Activated CD8-positive, alpha-beta T cell treated with anti-CD3 and anti-CD28 coated beads, Interleukin-2, amount 10 ng/mL, durations not matched to agents 7 days and 5 days (primary cell): ENCODE measurements at regions of chr17 and their contacts with region 1.

Region 1: DNA sequence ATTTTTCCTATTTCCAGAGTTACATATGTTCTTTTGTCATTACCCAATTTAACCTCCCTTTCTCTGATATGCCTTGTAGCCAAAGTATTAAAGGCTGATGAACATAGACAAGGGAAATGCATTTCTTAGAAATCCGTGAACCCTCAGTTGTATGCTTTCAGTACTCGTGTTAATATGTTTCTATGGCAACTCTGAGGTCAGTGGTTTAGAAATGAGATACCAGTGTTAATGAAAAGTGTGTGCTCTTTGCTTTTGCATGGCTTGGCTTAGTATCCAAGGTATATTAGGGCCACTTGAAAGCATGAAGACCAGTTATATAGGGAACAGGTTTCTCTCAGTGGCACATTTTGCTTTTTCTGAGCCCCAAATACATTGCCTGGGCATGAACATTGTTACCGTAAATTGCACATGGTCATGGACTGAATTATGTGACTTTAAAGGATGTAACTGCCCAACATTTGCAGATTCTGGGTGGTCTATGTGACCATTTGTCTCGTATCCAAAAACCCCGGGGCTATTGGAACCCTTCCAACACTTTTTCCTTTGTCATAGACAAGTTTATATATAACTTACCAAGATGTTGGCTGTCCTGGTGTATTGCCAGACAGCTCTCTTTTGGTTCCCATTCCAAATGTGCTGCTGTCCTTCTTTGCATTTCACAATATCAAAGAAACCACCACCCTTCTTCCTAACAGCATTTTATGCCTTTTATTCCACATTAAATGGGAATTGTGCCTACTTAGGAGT is 17.5 kb downstream of the ABHD15 start:
- DNase-seq: no peak
- ATAC-seq: peak; percentile 87
- H3K4me3 Mint-ChIP-seq: no peak overlapping the region
- H3K27ac Mint-ChIP-seq: no peak overlapping the region
- H3K4me1 Mint-ChIP-seq: peaks cover 21% of the 10 kb centered on the region
- H3K27me3 Mint-ChIP-seq: no peaks in the 10 kb centered on the region

Region 2: DNA sequence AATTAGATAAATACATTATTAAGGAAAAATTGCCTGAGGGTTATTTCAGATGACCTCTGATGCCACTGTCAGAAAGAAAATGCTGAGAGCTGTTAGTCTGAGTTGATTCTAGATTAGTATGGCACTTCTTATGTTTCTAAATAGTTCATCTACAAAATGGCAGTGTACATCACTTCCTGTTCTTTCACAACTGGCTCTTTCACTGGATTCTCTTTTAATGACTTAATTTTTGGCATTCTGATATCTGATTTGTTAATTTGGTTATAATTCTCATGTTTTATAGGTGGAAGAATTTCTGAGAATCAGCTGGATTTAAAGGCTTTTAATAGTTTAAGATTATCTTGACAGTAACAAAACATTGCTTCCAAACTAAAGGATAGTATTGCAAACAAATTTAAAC is 155.9 kb before region 1 on chr17:
- CTCF ChIA-PET with region 1: no interaction called
- POLR2A ChIA-PET with region 1: no interaction called
- DNase-seq: no peak
- ATAC-seq: no peak
- H3K4me3 Mint-ChIP-seq: no peak overlapping the region
- H3K27ac Mint-ChIP-seq: peak overlapping the region; percentile 28
- H3K4me1 Mint-ChIP-seq: peaks cover 39% of the 10 kb centered on the region
- H3K27me3 Mint-ChIP-seq: no peaks in the 10 kb centered on the region

Region 3: DNA sequence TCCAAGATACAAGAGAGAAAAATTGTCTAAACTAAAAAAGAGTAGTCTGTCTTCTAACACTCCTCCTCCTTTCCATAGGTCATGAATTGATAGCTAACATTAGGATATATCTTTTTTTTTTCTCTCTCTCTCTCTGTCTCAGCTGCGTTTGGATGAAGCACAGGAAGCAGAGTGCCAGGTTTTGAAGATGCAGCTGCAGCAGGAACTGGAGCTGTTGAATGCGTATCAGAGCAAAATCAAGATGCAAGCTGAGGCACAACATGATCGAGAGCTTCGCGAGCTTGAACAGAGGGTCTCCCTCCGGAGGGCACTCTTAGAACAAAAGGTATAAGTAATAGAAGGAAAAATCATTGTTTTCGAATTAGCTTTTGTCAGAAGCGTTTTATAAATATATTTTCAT is 15.4 kb before region 1 on chr17:
- CTCF ChIA-PET with region 1: interaction called, 12 read pairs
- POLR2A ChIA-PET with region 1: no interaction called
- DNase-seq: no peak
- ATAC-seq: no peak
- H3K4me3 Mint-ChIP-seq: no peak overlapping the region
- H3K27ac Mint-ChIP-seq: no peak overlapping the region
- H3K4me1 Mint-ChIP-seq: no peaks in the 10 kb centered on the region
- H3K27me3 Mint-ChIP-seq: no peaks in the 10 kb centered on the region

Region 4: GRCh38 chr17:29722411-29723198 is 173.3 kb after region 1 on chr17:
- CTCF ChIA-PET with region 1: no interaction called
- POLR2A ChIA-PET with region 1: no interaction called
- DNase-seq: peak; percentile 41
- ATAC-seq: peak; percentile 73
- H3K4me3 Mint-ChIP-seq: peak overlapping the region; percentile 3
- H3K27ac Mint-ChIP-seq: peak overlapping the region; percentile 20
- H3K4me1 Mint-ChIP-seq: peaks cover 55% of the 10 kb centered on the region
- H3K27me3 Mint-ChIP-seq: no peaks in the 10 kb centered on the region